Upper lobe of right lung (tissue), 1 donor: ENCODE measurements at regions of chr5 and their contacts with region 1.

Region 1: DNA sequence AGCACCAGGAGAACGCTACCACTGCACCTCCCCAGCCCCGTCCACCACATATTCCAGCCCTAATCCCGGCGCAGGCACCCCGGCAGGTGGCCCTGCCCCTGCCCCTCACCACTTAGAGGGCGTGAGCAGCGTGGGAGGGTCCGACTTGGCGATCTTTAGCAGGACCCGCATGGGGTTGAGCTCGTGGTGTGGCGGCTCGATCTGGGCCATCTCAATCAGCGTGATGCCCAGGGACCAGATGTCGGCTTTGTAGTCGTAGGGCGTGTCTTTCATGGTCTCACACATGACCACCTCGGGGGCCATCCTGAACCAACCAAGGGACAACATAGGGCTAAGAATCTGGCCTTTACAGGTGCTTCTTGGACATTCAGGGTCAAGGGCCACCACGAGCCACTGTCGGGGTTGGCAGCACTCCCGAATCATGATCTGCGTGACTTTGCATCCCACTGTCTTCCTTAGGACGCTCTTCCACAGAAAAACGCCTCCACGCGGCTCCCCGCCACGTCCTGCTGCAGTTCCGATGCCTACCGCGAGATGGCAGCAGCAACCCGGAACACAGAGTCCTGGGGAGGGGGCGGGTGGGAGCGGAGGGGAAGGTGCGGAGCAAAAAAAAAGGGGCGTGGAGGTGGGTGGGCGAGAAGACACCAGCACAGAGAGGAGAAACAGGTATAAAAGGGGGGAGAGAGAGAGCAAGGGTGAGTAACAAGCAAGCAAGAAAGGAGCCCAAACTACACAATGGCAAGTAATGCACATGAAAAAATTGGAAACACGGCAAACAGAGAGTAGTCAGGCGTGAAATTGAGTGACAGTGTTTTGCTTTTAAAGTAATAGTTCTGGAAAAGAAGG is 81.3 kb downstream of the STK10 start:
- DNase-seq: peak; percentile 75
- ATAC-seq: peak; percentile 63
- H3K4me3 ChIP-seq: peak overlapping the region; percentile 16
- H3K27ac ChIP-seq: no peak overlapping the region
- H3K4me1 ChIP-seq: peaks cover 56% of the 10 kb centered on the region
- H3K27me3 ChIP-seq: no peaks in the 10 kb centered on the region
- CTCF ChIP-seq: peak; percentile 92

Region 2: GRCh38 chr5:171863930-171864329 is 242.8 kb before region 1 on chr5:
- intact Hi-C with region 1: no loop called
- DNase-seq: no peak
- ATAC-seq: peak; percentile 45
- H3K4me3 ChIP-seq: no peak overlapping the region
- H3K27ac ChIP-seq: no peak overlapping the region
- H3K4me1 ChIP-seq: peaks cover 6% of the 10 kb centered on the region
- H3K27me3 ChIP-seq: no peaks in the 10 kb centered on the region
- CTCF ChIP-seq: no peak

Region 3: DNA sequence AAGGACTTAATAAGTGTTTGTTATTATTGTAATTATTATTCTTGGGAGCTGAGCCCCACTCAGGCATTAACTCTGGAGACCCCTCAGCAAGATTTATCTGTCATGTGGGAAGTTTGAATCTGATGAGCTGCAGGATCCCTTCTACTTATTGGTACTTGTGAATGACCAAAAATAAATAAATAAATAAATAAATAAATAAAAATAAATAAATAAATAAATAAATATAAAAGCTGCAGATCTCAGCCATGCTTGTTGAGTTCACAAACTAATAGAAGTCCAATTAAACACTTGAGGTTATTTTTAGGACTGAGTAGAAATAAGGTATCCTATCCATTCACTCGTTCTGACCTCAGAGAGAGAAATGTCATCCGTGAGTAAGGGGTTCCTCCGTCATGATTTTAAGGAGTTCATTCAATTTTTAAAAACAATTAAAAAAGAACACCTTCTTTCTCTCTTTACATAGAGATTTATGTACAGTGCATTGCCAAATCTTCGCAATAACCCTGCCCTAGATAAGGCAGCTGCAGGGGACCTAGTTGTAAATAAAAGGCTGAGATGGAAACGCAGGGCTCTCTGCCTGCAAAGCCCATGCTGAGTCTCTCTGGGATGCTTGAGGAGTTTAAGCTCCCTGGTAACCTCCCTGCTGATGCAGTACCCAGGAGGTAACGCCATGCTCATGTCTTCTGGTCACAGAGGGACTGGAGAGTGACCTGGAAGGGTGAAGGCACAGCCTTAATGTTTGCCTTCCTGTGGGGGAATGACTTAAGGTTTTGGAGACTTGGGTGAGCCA is 88.4 kb after region 1 on chr5:
- intact Hi-C with region 1: loop called (anchors 5 kb)
- DNase-seq: no peak
- ATAC-seq: no peak
- H3K4me3 ChIP-seq: no peak overlapping the region
- H3K27ac ChIP-seq: no peak overlapping the region
- H3K4me1 ChIP-seq: no peaks in the 10 kb centered on the region
- H3K27me3 ChIP-seq: no peaks in the 10 kb centered on the region
- CTCF ChIP-seq: no peak

Region 4: DNA sequence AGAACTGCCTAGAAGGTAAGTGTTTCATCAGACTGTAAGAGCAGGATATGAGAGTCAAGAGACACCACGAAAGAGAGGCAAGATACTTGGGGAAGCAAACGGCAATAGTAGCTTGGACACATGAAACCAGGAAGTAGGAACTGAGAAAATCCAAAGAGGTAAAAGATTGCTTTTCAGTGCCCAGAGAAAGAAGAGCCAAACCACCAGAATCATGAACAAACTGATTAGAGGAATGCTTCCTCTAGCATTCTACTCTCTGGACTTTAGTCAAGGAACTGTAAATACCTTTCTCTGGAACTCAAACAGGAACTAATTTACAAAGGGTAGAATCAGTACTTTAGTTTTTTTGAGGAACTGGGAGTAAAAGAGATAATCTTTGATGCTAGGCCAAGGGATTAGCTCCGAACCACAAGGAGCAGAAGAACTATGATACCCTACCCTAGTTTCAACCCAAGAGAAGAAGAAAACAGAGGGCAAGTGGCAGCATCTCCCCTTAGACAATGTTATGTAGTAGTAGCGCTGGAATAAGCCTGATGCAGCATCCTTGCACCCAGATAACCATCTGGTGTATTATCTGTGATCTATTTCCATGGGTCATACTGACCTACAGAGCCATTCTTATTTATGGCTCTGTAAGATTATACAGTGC is 128.5 kb after region 1 on chr5:
- intact Hi-C with region 1: no loop called
- DNase-seq: no peak
- ATAC-seq: peak; percentile 47
- H3K4me3 ChIP-seq: no peak overlapping the region
- H3K27ac ChIP-seq: no peak overlapping the region
- H3K4me1 ChIP-seq: peaks cover 10% of the 10 kb centered on the region
- H3K27me3 ChIP-seq: no peaks in the 10 kb centered on the region
- CTCF ChIP-seq: no peak

Region 5: DNA sequence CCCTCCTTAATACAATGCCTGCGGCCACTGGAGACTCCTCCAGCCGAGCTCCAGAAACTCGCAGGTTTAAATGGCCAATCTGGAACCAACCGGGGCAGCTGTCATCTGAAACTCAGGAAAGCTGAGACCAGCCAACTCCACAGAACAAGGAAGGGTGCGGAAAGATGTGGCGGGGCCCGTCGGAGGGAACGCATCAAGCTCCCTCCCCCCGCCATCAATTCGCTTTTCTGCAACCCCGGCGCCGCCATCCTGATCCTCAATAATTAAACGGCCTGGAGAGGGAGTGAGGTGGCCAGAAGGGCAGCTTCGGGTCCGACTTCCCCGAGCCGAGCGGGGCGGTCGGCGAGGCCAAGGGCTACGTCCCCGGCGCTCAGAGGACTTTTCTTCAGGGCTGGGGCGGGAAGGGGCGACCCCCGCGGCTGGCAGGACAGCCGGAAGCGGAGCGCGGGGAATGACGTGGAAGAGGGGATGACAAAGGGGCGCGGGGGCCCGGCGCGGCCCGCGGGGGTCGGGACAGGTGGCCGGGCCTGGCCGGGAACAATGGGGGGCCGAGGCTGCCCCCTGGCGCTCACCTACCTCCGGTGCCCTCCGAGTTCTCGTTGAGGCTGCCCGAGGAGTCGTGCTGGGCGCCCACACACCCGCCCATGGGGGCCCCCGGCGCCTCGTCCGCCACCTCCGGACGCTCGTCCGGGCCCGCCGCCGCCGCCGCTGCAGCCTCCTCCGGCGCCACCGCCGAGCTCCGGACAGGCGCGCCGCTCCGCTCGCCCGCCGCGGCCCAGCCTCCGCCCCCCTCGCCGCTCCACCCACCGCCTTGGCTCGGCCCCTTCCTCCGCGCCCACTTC is 176.5 kb after region 1 on chr5 and contains the start of gene UBTD2:
- intact Hi-C with region 1: loop called (anchors 10 kb)
- DNase-seq: peak; percentile 93
- ATAC-seq: peak; percentile 90
- H3K4me3 ChIP-seq: peak within 1 kb of the TSS; percentile 92
- H3K27ac ChIP-seq: peak within 1 kb of the TSS; percentile 85
- H3K4me1 ChIP-seq: peaks cover 12% of the 10 kb centered on the region
- H3K27me3 ChIP-seq: no peaks in the 10 kb centered on the region
- CTCF ChIP-seq: peak; percentile 58
- total RNA-seq, gene UBTD2: 18.8 TPM